ENCODE measurements at regions of chr22 and their contacts with region 1.

Region 1: GRCh38 chr22:50627642-50628542 is at the start of gene ARSA:
- DNase-seq: peak; percentile 92
- total RNA-seq, gene ARSA: 33.7 TPM

Region 2: DNA sequence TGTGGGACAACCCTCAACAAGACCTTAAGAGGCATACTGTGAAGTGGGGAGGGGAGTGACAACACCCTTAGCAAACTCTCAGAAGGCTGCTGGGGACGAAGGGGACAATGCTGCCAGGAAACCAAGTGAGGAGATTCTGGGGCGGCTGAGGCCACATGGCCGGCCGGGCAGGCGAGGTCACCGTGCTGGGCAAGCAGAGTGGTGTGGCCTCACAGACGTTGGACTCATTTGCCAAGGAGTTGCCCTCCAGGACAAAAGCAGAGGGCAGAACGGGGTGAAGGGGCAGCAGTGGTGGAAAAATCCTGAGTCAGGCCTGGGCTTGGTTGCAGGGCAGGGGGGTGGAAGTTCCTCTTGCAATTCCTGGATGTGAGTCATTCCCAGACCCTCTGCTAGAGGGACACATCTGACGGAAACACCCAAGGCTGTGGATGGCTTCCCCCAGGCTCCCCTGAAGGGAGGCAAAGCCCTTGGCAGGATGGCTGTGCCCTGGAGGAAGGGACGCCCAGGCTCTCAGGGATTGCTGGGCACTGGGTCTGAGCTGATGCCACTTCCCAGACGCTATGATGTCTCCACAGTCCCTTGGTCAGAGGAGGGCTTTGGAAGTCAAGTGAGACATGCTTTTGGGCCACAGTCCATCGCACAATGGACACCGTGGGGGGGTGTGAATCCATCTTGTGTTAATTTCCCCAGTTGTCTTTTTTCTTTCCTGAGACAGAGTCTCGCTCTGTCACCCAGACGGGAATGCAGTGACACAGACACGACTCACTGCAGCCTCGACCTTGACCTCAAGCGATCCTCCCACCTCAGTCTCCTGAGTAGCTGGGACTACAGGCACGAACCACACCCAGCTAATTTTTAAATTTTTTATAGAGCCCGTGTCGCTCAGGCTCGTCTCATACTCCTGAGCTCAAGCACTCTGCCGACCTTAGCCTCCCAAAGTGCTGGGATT is 28.5 kb after region 1 on chr22:
- intact Hi-C with region 1: no loop called
- DNase-seq: peak; percentile 73

Region 3: DNA sequence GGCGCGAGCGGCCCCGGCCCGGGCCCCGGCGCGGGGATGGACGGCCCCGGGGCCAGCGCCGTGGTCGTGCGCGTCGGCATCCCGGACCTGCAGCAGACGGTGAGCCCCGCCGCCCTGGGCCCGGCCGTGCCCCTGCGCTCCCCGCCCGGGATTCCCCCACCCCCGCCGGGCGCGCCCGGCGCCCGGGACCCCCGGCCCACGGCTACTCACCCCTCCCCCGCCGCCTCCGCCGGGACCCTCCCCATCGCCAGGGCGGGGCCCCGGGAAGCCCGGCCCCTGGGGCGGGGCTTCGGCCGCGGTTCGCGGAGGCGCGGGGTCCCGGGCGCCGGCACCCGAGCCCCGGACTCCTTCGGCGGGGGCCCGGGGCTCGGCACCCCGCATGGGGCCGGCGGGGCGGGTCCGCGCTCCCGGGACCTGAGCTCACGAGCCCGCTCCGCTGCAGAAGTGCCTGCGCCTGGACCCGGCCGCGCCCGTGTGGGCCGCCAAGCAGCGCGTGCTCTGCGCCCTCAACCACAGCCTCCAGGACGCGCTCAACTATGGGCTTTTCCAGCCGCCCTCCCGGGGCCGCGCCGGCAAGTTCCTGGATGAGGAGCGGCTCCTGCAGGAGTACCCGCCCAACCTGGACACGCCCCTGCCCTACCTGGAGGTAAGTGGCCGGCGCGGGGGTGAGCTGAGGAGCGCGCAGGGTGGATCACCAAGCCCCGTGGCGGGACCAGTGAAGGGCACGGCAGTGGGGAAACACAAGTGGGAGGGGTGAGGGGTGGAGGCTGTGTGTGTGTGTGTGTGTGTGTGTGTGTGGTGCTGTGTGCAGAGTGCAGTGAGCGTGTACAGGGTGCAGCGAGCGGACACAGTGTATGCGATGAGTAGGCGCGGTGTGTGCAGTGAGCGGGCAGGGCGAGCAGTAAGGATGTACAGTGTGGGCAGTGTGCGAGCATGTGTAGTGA is 47.0 kb after region 1 on chr22:
- intact Hi-C with region 1: no loop called
- DNase-seq: no peak

Region 4: GRCh38 chr22:50699941-50700386 is 72.1 kb after region 1 on chr22:
- intact Hi-C with region 1: loop called (anchors 5 kb)
- DNase-seq: peak; percentile 4